Activated CD4-positive, alpha-beta T cell treated with anti-CD3 and anti-CD28 coated beads, Interleukin-2, amount 10 ng/mL, durations not matched to agents 7 days and 5 days (primary cell): ENCODE measurements at regions of chr17 and their contacts with region 1.

Region 1: DNA sequence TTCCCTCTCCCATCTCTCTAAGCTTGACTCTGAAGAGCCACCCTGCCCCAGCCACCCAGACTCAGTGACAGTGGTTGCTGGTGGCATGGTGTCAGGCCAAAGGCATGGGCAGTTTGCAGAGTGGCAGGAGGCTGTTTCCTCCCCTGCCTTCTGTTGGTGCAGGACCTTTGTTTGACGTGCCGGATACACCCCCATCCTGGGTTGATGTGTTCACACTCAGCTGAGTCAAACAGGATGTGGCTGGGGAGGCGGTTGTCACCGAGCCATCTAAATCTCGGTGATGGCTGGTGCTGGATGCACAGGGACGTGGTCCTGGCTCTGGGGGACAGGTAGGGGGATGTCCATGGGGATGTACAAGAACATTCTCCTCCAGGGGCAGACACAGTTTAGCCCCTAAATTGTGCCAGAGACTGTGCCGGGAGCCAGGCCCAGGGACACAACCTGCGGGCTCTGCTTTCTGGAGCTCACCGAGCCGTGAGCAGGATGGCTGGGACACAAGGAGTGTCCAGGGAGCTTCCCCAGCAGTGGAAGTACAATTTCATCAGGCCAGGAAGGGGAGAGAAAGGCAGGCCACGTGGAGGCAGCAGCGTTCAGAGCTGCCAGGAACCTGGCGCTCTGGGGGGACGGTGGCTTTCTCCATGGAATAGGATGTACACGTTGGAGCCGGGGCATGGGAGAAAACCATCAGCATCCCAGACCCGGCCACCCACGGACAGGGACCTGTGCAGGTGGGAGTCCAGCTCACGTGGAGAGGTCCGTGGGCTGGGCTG is 264.2 kb downstream of the SEC14L1 start:
- DNase-seq: peak; percentile 90
- H3K4me3 Mint-ChIP-seq: peak overlapping the region; percentile 91
- H3K27ac Mint-ChIP-seq: peak overlapping the region; percentile 91
- H3K4me1 Mint-ChIP-seq: peaks cover 94% of the 10 kb centered on the region
- H3K27me3 Mint-ChIP-seq: no peaks in the 10 kb centered on the region

Region 2: GRCh38 chr17:77374170-77374936 is 30.6 kb before region 1 on chr17:
- CTCF ChIA-PET with region 1: interaction called, 14 read pairs
- POLR2A ChIA-PET with region 1: interaction called, 5 read pairs
- DNase-seq: peak; percentile 86
- H3K4me3 Mint-ChIP-seq: peak overlapping the region; percentile 86
- H3K27ac Mint-ChIP-seq: peak overlapping the region; percentile 89
- H3K4me1 Mint-ChIP-seq: peaks cover 70% of the 10 kb centered on the region
- H3K27me3 Mint-ChIP-seq: no peaks in the 10 kb centered on the region

Region 3: DNA sequence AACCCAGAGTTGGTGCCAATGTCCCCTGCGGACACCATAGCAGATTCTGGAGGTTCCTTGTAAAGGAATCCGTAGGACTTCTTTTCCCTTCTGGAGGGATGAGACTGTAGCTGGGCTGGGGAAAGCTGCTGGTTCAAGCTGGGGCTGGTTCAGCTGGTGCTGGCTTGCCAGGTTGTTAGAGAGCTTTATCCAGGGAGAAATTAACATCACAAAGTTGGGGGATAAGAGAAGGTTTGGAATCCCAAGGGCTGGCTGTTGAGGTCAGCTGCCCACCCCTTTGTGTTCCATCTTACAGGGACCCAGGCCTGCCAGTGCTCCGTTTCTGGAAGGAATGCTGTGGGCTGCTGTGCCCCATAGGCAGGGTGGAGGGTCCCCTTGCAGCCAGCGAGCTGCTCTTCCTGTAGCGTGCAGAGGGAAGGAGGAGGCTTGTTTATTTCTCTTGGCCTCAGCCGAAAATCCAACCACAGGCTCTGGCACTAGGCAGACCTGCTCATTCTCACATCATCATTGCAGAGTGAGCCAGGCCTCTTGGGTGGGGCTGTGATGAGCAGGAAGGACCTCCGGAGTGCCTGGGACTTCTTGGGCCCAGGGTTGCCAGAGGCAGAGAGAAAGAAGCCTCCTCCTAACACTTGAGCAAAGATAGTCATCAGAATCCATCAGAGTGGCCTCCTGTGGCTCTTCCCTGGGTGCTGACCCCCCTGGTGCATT is 13.2 kb before region 1 on chr17:
- CTCF ChIA-PET with region 1: interaction called, 36 read pairs
- POLR2A ChIA-PET with region 1: interaction called, 3 read pairs
- DNase-seq: peak; percentile 67
- H3K4me3 Mint-ChIP-seq: peak overlapping the region; percentile 86
- H3K27ac Mint-ChIP-seq: peak overlapping the region; percentile 95
- H3K4me1 Mint-ChIP-seq: peaks cover 87% of the 10 kb centered on the region
- H3K27me3 Mint-ChIP-seq: no peaks in the 10 kb centered on the region

Region 4: DNA sequence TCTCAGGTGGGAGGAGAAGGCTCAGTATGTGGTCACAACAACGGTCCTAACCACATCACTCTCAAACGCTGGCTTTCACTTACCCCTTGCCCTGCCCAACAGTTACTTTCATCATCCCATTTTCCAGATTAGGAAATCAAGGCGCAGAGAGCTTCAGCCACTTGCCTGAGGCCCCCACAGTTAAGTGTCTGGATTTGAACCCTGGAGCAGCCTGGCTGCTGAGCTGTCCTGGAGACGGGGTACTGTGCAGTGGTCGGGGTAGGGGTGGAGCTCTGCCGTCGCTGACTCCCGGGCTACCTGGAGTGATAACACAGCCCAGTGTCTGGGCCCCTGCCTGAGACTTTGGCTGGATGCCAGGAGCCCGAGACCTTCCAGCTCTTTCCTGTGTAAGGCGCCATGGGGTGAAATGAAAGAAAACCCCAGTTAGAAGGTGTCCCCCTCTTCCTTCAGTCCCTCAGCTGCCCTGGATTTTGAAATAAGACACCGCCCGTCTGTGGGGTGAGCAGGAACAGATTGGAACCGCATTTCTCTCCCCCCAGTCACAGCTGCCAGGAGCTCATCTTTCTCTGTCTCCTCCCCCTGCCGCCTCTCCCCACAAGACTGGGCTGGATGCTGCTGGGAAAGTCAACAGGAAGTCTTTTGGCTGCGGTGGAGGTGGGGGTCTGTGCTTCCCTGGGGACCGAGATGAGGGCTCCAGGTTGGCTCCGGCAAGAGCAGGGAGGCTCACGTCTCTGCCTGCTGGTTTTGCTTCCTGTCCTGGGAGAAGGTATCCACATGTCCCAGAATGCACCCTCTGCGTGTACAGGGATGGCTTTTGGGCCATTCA is 16.0 kb after region 1 on chr17:
- CTCF ChIA-PET with region 1: interaction called, 58 read pairs
- POLR2A ChIA-PET with region 1: no interaction called
- DNase-seq: peak; percentile 53
- H3K4me3 Mint-ChIP-seq: peak overlapping the region; percentile 39
- H3K27ac Mint-ChIP-seq: peak overlapping the region; percentile 85
- H3K4me1 Mint-ChIP-seq: peaks cover 75% of the 10 kb centered on the region
- H3K27me3 Mint-ChIP-seq: no peaks in the 10 kb centered on the region

Region 5: DNA sequence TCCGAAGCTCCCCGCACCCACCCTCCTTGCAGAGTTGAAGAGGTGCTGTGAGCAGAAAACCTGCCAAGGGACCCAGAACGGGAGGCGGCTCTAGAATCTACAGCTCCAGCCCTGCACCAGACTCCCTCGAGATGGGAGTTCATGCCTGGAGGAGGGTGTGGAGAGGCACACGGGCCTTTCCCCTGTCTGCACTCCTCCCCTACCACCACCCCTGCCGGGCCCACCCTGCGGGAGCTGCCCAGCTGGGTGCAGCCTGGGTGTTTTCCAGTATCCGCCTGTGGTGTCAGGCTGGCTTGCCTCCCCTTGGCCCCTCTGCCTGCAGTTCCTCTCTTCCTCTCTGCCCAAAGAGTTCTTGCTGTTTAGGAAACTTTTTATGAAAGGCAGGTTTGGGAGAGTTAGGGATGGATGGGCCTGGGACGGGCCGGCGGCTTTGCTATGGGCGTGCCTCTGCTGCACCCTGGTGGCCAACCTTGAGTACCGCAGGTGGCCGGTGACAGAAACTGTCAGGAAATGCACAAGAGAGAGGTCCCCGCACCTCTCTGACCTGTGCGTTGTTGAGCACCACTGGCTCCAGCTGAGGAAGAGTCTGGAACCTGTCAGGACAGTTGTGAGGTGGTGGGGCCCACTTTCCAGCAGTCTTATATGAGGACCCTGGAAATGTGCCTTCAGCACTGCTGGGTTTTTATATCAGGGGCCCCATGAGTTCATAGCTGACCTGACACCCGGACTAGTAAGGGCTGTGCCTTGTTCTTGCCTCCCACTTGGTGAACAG is 89.9 kb after region 1 on chr17:
- CTCF ChIA-PET with region 1: interaction called, 14 read pairs
- POLR2A ChIA-PET with region 1: no interaction called
- DNase-seq: peak; percentile 74
- H3K4me3 Mint-ChIP-seq: no peak overlapping the region
- H3K27ac Mint-ChIP-seq: peak overlapping the region; percentile 72
- H3K4me1 Mint-ChIP-seq: peaks cover 30% of the 10 kb centered on the region
- H3K27me3 Mint-ChIP-seq: no peaks in the 10 kb centered on the region

Region 6: DNA sequence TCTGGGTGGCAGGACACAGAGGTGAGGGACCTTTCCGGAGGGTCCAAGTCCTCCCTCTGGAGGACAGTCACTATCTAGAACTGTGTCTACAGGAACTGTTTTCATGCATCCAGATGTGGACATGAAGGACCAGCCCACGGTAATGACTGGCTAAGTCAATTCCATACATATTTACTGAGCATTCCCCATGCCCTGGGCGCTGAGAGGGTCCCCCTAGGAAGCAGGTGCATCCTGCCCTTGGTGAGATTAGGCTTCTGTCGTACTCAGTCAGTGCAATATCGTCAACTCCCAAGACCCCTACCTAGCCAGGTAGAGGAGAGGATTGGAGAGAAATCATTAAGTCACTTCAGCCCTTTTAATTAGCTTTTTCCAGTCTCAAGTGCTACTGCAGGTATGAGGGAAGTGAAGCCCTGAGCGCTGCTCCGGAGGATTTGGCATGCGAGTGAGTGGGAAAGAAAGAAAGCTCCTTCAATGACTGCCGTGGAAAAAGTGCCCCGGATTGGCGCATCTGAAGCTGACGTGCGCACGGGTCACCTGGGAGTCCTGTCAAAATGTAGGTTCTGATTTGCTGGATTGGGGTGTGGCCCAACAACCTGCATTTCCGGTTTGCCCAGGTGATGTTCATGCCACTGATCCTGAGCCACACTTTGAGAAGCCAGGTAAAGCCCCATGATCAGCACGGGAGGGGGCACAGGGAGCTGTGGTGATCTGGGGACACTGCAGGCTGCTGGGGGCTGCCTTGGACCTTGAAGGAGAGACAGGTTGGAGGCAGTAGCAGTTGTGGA is 186.1 kb after region 1 on chr17:
- CTCF ChIA-PET with region 1: no interaction called
- POLR2A ChIA-PET with region 1: no interaction called
- DNase-seq: no peak
- H3K4me3 Mint-ChIP-seq: no peak overlapping the region
- H3K27ac Mint-ChIP-seq: no peak overlapping the region
- H3K4me1 Mint-ChIP-seq: peaks cover 19% of the 10 kb centered on the region
- H3K27me3 Mint-ChIP-seq: peaks cover 59% of the 10 kb centered on the region